ENCODE measurements at regions of chr13 and their contacts with region 1.

Region 1: DNA sequence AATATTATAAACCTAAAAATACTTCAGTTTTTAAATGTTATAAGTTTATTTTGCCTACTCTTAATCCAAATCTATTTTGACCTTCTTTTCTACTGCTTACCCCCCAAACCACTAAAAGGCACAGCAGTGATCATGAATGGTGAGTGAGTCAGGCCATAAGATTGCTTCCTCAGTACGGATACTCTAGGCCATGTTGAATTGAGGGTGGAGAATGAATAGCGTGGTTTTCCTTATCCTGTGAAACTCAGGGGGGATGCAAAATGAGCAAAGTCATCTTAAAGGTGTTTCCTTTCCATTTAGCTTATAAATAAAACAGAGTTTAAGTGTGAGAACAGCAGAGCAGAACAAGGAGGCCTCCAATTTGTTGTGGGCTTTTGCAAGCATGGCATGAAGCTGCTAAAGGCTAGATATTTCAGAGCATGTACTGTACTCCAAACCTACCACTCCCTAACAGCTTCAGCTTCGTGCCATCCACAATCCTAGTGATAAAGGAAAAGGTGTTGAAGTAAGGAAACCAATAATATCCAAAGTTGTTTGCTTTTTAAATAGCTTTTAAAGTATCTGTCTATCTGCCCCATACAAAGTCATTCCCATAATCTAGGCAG is 25.0 kb downstream of the SERPINE3 start:
- DNase-seq: peak; percentile 79
- ATAC-seq: peak; percentile 97
- H3K4me3 ChIP-seq: no peak overlapping the region
- H3K27ac ChIP-seq: no peak overlapping the region
- H3K4me1 ChIP-seq: no peaks in the 10 kb centered on the region; the same call in 1 of the 2 replicates
- H3K27me3 ChIP-seq: no peaks in the 10 kb centered on the region
- CTCF ChIP-seq: no peak
- POLR2A ChIP-seq: no peak
- RAD21 ChIP-seq: no peak

Region 2: GRCh38 chr13:51380269-51380668 is 15.8 kb after region 1 on chr13:
- CTCF ChIA-PET with region 1: no interaction called
- POLR2A ChIA-PET with region 1: no interaction called
- dilution Hi-C with region 1: no loop called
- in situ Hi-C with region 1: no loop called
- intact Hi-C with region 1: loop called (anchors 2 kb)
- DNase-seq: peak; percentile 16
- ATAC-seq: no peak
- H3K4me3 ChIP-seq: no peak overlapping the region
- H3K27ac ChIP-seq: no peak overlapping the region
- H3K4me1 ChIP-seq: no peaks in the 10 kb centered on the region
- H3K27me3 ChIP-seq: no peaks in the 10 kb centered on the region
- CTCF ChIP-seq: no peak
- POLR2A ChIP-seq: no peak
- RAD21 ChIP-seq: no peak

Region 3: GRCh38 chr13:51583875-51584730 is 219.6 kb after region 1 on chr13 and contains the start of gene WDFY2:
- CTCF ChIA-PET with region 1: no interaction called
- POLR2A ChIA-PET with region 1: no interaction called
- dilution Hi-C with region 1: no loop called
- in situ Hi-C with region 1: no loop called
- intact Hi-C with region 1: no loop called
- DNase-seq: peak; percentile 100
- ATAC-seq: peak; percentile 90
- H3K4me3 ChIP-seq: peak within 1 kb of the TSS; percentile 97
- H3K27ac ChIP-seq: peak within 1 kb of the TSS; percentile 81
- H3K4me1 ChIP-seq: peaks cover 5% of the 10 kb centered on the region
- H3K27me3 ChIP-seq: no peaks in the 10 kb centered on the region
- CTCF ChIP-seq: peak; percentile 31; the same call in 1 of the 2 replicates
- POLR2A ChIP-seq: peak; percentile 92
- RAD21 ChIP-seq: peak; percentile 29
- total RNA-seq, gene WDFY2: 4.3 and 6.7 TPM in 2 replicates